Activated CD8-positive, alpha-beta T cell treated with anti-CD3 and anti-CD28 coated beads for 36 hours (primary cell): ENCODE measurements at regions of chr7 and their contacts with region 1.

Region 1: DNA sequence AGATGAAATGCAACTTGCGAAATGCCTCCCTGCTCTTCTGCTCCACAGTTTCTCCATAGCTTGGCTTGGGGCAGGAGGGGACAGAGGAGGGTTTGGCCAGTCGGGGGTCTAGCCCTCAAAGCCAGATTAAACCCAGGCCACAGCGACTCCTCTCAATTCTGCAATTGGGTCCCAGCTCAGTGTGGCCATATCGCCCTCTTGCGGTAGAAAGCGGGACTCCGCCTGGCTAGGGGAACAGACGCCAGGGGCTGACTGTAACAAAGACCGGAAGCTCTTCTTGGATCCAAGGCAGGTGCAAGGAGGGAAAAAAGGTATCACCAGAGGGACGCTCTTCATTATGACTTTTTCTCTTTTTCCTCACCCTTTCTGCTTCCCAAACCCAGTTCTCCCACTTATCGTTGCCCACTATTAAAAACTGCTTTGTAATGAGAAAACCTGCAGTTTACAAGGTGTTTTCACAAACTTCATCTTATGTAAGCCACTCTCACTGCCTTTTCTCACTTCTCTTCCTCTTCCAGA is 36.6 kb upstream of the TNPO3 start:
- DNase-seq: peak; percentile 94
- ATAC-seq: peak; percentile 92
- H3K4me3 Mint-ChIP-seq: no peak overlapping the region
- H3K27ac Mint-ChIP-seq: peak overlapping the region; percentile 73
- H3K4me1 Mint-ChIP-seq: peaks cover 19% of the 10 kb centered on the region
- H3K27me3 Mint-ChIP-seq: peaks cover 1% of the 10 kb centered on the region
- CTCF ChIP-seq: peak; percentile 96

Region 2: GRCh38 chr7:128883622-128884501 is 207.7 kb before region 1 on chr7:
- CTCF ChIA-PET with region 1: interaction called, 18 read pairs
- POLR2A ChIA-PET with region 1: no interaction called
- intact Hi-C with region 1: no loop called
- DNase-seq: peak; percentile 92
- ATAC-seq: peak; percentile 82
- H3K4me3 Mint-ChIP-seq: peak overlapping the region; percentile 39
- H3K27ac Mint-ChIP-seq: peak overlapping the region; percentile 32
- H3K4me1 Mint-ChIP-seq: peaks cover 2% of the 10 kb centered on the region
- H3K27me3 Mint-ChIP-seq: peaks cover 4% of the 10 kb centered on the region
- CTCF ChIP-seq: peak; percentile 95

Region 3: GRCh38 chr7:128954830-128955802 is 136.4 kb before region 1 on chr7:
- CTCF ChIA-PET with region 1: interaction called, 10 read pairs
- POLR2A ChIA-PET with region 1: interaction called, 3 read pairs
- intact Hi-C with region 1: no loop called
- DNase-seq: no peak
- ATAC-seq: no peak
- H3K4me3 Mint-ChIP-seq: no peak overlapping the region
- H3K27ac Mint-ChIP-seq: peak overlapping the region; percentile 34
- H3K4me1 Mint-ChIP-seq: peaks cover 17% of the 10 kb centered on the region
- H3K27me3 Mint-ChIP-seq: no peaks in the 10 kb centered on the region
- CTCF ChIP-seq: no peak

Region 4: GRCh38 chr7:129017933-129018538 is 73.5 kb before region 1 on chr7:
- CTCF ChIA-PET with region 1: interaction called, 10 read pairs
- POLR2A ChIA-PET with region 1: no interaction called
- intact Hi-C with region 1: no loop called
- DNase-seq: no peak
- ATAC-seq: no peak
- H3K4me3 Mint-ChIP-seq: no peak overlapping the region
- H3K27ac Mint-ChIP-seq: peak overlapping the region; percentile 32
- H3K4me1 Mint-ChIP-seq: peaks cover 32% of the 10 kb centered on the region
- H3K27me3 Mint-ChIP-seq: no peaks in the 10 kb centered on the region
- CTCF ChIP-seq: no peak

Region 5: GRCh38 chr7:129110258-129110981 is 18.9 kb after region 1 on chr7:
- CTCF ChIA-PET with region 1: interaction called, 13 read pairs
- POLR2A ChIA-PET with region 1: no interaction called
- intact Hi-C with region 1: no loop called
- DNase-seq: peak; percentile 19
- ATAC-seq: peak; percentile 34
- H3K4me3 Mint-ChIP-seq: no peak overlapping the region
- H3K27ac Mint-ChIP-seq: no peak overlapping the region
- H3K4me1 Mint-ChIP-seq: peaks cover 5% of the 10 kb centered on the region
- H3K27me3 Mint-ChIP-seq: peaks cover under 1% of the 10 kb centered on the region
- CTCF ChIP-seq: no peak

Region 6: GRCh38 chr7:129169171-129169671 is 77.7 kb after region 1 on chr7:
- CTCF ChIA-PET with region 1: interaction called, 19 read pairs
- POLR2A ChIA-PET with region 1: no interaction called
- intact Hi-C with region 1: no loop called
- DNase-seq: peak; percentile 65
- ATAC-seq: peak; percentile 75
- H3K4me3 Mint-ChIP-seq: peak overlapping the region; percentile 66
- H3K27ac Mint-ChIP-seq: peak overlapping the region; percentile 77
- H3K4me1 Mint-ChIP-seq: peaks cover 17% of the 10 kb centered on the region
- H3K27me3 Mint-ChIP-seq: no peaks in the 10 kb centered on the region
- CTCF ChIP-seq: no peak